ENCODE measurements at regions of chrX and their contacts with region 1.

Region 1: GRCh38 chrX:11341274-11342201 is 48.3 kb downstream of the AMELX start:
- DNase-seq: no peak
- ATAC-seq: no peak
- H3K4me3 ChIP-seq: no peak overlapping the region
- H3K27ac ChIP-seq: no peak overlapping the region
- H3K4me1 ChIP-seq: no peaks in the 10 kb centered on the region
- H3K27me3 ChIP-seq: no peaks in the 10 kb centered on the region
- CTCF ChIP-seq: no peak

Region 2: GRCh38 chrX:11273544-11273943 is 68.0 kb before region 1 on chrX:
- CTCF ChIA-PET with region 1: no interaction called
- POLR2A ChIA-PET with region 1: interaction called, 18 read pairs
- in situ Hi-C with region 1: no loop called
- intact Hi-C with region 1: no loop called
- DNase-seq: no peak
- ATAC-seq: no peak
- H3K4me3 ChIP-seq: no peak overlapping the region
- H3K27ac ChIP-seq: no peak overlapping the region
- H3K4me1 ChIP-seq: no peaks in the 10 kb centered on the region
- H3K27me3 ChIP-seq: no peaks in the 10 kb centered on the region
- CTCF ChIP-seq: no peak

Measured in Panc1 (cell line).